ENCODE measurements at regions of chr2 and their contacts with region 1.

Region 1: DNA sequence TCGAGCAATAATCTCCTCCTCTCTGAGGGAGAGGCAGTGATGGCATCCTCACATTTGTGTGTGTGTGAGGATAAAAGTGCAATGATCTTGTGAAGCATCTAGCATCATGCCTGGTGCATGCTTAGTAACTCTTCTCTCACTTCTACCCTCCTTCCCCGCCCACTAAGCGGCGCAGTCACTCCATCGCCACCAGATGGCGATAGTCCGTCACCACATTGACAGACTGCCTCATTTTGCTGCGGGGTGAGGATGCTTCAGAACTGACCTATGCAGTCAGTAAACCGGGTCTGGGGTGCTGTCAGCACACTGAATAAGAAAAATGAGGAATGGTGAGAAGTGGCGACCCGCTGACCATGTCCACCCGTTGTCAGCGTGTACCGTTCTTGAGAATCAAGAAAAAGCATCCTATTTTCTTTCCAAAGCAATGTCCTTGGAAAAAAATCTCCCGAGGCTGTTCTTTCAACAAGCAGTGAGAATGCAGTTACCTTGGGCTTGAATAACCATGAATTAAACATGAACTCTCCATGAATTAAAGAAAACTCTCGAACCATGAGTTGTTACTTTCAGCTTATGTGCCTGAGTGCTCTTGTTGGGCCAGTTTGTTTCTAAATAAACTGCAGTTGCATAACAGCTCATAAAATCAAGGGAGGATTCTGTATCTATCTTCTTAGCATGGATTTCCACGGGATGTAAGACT is 37.3 kb upstream of the TMEM177 start:
- DNase-seq: peak; percentile 78
- ATAC-seq: peak; percentile 79

Region 2: GRCh38 chr2:119523952-119524694 is 117.6 kb before region 1 on chr2 and contains the start of gene SCTR:
- intact Hi-C with region 1: loop called (anchors 10 kb)
- DNase-seq: no peak
- ATAC-seq: no peak
- total RNA-seq, gene SCTR: 0.41 TPM

Region 3: DNA sequence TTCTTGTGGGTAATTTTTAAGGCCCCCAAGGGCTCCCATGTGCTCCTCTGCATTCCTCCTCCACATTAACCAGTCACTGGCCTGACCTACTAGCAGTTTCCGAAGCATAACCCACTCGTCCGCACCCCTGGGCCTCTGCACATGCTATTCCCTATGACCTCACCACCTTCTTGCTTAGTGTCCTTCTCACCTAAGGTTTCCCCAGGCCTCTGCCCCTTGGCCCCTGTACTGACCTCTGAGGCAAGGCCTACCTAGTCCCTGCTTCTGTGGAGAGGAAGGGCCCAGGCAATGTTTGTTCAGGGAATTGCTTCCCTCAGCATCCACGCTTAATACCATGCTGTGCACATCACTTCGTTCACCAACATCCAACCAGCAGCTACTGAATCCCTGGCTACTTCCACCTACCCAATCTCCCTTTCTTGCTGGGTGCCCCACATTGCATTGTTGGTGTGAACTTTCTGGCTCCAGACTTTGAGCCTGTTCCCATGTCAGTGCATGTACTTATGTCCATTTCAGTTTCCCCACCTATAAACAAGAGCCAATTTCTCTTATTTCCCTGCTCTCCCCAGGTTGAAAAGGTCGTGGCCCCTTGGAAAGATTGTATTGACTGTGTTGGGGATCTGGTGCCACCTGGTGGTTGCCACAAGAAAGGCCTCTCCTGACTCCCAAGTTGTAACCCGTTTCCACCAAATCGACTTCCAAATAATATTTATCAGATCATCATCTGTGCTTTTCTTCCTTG is 18.1 kb after region 1 on chr2:
- intact Hi-C with region 1: loop called (anchors 1 kb)
- DNase-seq: no peak
- ATAC-seq: peak; percentile 37